ENCODE measurements at regions of chrX and their contacts with region 1.

Region 1: GRCh38 chrX:48021026-48021900 is 14.5 kb downstream of the SPACA5 start:
- DNase-seq: no peak
- ATAC-seq: peak; percentile 91
- H3K4me3 ChIP-seq: peak overlapping the region; percentile 59 to 68
- H3K27ac ChIP-seq: peak overlapping the region; percentile 99
- H3K4me1 ChIP-seq: no peaks in the 10 kb centered on the region; the same call in 1 of the 2 replicates
- H3K27me3 ChIP-seq: no peaks in the 10 kb centered on the region
- CTCF ChIP-seq: no peak

Region 2: DNA sequence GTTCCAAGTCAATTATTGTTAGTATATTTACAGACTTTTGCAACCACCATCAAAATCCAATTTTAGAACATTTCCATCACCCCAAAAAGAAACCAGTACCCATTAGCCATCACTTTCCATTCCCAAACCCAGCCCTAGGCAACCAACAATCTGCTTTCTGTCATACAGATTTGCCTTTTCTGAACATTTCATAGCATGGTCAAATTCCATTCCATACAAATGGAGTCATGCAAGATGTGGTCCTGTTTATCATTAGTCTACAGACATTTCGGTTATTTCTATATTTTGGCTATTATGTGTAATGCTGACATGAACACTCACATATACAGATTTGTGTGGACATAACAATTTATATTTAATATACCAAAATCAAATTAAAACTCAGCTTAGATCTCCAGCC is 1984.8 kb before region 1 on chrX:
- CTCF ChIA-PET with region 1: no interaction called
- POLR2A ChIA-PET with region 1: no interaction called
- in situ Hi-C with region 1: no loop called
- intact Hi-C with region 1: no loop called
- DNase-seq: no peak
- ATAC-seq: no peak
- H3K4me3 ChIP-seq: no peak overlapping the region
- H3K27ac ChIP-seq: no peak overlapping the region
- H3K4me1 ChIP-seq: no peaks in the 10 kb centered on the region
- H3K27me3 ChIP-seq: no peaks in the 10 kb centered on the region
- CTCF ChIP-seq: no peak

Region 3: GRCh38 chrX:47854474-47854873 is 166.8 kb before region 1 on chrX:
- CTCF ChIA-PET with region 1: no interaction called
- POLR2A ChIA-PET with region 1: interaction called, 5 read pairs
- in situ Hi-C with region 1: no loop called
- intact Hi-C with region 1: loop called (anchors 1 kb)
- DNase-seq: no peak
- ATAC-seq: peak; percentile 84; the same call in 1 of the 2 replicates
- H3K4me3 ChIP-seq: no peak overlapping the region
- H3K27ac ChIP-seq: no peak overlapping the region
- H3K4me1 ChIP-seq: no peaks in the 10 kb centered on the region
- H3K27me3 ChIP-seq: no peaks in the 10 kb centered on the region
- CTCF ChIP-seq: peak; percentile 75

Region 4: DNA sequence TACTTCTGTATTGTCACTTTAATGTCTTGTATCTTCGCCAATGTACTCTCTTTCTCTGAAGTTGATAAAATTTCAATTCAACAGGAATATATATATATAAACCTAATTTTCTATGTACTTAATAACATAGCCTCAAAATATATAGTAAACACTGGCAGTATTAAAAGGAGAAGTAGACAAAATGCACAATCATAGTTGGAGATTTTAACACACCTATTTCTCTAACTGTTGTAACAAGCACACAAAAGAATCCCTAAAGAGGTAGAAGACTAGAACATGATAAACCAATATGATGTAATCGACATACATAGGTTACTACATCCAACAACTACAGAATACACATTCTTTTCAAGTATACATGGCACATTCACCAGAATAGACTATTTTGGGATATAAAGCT is 119.1 kb before region 1 on chrX:
- CTCF ChIA-PET with region 1: no interaction called
- POLR2A ChIA-PET with region 1: no interaction called
- in situ Hi-C with region 1: no loop called
- intact Hi-C with region 1: no loop called
- DNase-seq: no peak
- ATAC-seq: no peak
- H3K4me3 ChIP-seq: no peak overlapping the region
- H3K27ac ChIP-seq: no peak overlapping the region
- H3K4me1 ChIP-seq: no peaks in the 10 kb centered on the region
- H3K27me3 ChIP-seq: no peaks in the 10 kb centered on the region
- CTCF ChIP-seq: no peak

Measured in Panc1 (cell line).